CD4-positive, alpha-beta T cell (primary cell): ENCODE measurements at regions of chr12 and their contacts with region 1.

Region 1: GRCh38 chr12:9049520-9050133 is 60.3 kb downstream of the KLRG1 start:
- DNase-seq: peak in 4 of 14 experiments; percentile 60 to 79 (median 74)
- ATAC-seq: peak; percentile 85
- H3K4me3 ChIP-seq: no peak overlapping the region
- H3K4me3 Mint-ChIP-seq: no peak overlapping the region
- H3K27ac ChIP-seq: no peak overlapping the region
- H3K27ac Mint-ChIP-seq: peak overlapping the region; percentile 15
- H3K4me1 ChIP-seq: peaks cover 9% of the 10 kb centered on the region
- H3K4me1 Mint-ChIP-seq: peaks cover 27% of the 10 kb centered on the region
- H3K27me3 ChIP-seq: no peaks in the 10 kb centered on the region
- H3K27me3 Mint-ChIP-seq: no peaks in the 10 kb centered on the region
- CTCF ChIP-seq: peak; percentile 74

Region 2: GRCh38 chr12:8549381-8549780 is 500.2 kb before region 1 on chr12:
- CTCF ChIA-PET with region 1: interaction called, 5 read pairs
- POLR2A ChIA-PET with region 1: interaction called, 5 read pairs
- intact Hi-C with region 1: loop called (anchors 1 to 5 kb)
- DNase-seq: no peak
- ATAC-seq: no peak
- H3K4me3 ChIP-seq: no peak overlapping the region
- H3K4me3 Mint-ChIP-seq: no peak overlapping the region
- H3K27ac ChIP-seq: no peak overlapping the region
- H3K27ac Mint-ChIP-seq: no peak overlapping the region
- H3K4me1 ChIP-seq: no peaks in the 10 kb centered on the region
- H3K4me1 Mint-ChIP-seq: peaks cover 3% of the 10 kb centered on the region
- H3K27me3 ChIP-seq: no peaks in the 10 kb centered on the region
- H3K27me3 Mint-ChIP-seq: peaks cover 9% of the 10 kb centered on the region
- CTCF ChIP-seq: no peak

Region 3: DNA sequence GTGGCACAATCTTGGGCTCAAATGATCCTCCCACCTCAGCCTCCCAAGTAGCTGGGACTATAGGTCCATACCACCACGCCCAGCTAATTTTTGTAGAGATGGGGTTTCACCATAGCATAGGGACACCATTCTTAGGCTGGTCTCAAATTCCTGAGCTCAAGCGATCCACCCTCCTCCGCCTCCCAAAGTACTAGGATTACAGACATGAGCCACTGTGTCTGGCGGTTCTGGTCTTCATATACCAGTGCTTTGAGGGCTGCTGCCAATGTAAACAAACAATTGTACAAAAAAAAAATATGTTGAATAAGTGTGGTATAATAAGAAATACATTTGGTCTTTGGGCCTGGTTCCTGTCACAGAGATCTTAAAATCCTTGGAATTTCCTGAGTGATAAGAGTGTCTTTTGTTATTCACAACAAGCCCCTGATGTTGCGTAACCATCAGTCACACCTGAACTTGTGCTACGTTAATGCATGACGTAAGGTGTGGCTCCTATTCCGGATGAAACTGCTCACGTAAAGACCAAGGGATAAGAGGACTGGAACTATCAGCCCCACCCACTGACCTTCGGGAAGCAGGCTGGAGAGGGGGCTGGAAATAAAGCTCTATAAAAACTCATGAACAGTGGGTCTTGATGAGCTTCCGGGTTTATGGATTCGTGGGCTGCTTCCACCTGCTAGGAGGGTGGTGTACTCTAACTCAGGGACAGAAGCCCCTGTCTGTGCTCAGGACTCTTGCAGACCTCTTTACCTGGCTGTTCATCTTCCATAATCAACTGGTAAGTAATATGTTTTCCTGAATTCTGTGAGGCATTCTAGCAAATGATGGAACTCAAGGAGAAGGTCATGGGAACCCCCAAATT is 368.4 kb before region 1 on chr12:
- CTCF ChIA-PET with region 1: interaction called, 6 read pairs
- POLR2A ChIA-PET with region 1: no interaction called
- intact Hi-C with region 1: loop called (anchors 1 kb)
- DNase-seq: no peak
- ATAC-seq: no peak
- H3K4me3 ChIP-seq: no peak overlapping the region
- H3K4me3 Mint-ChIP-seq: no peak overlapping the region
- H3K27ac ChIP-seq: no peak overlapping the region
- H3K27ac Mint-ChIP-seq: no peak overlapping the region
- H3K4me1 ChIP-seq: peaks cover 5% of the 10 kb centered on the region
- H3K4me1 Mint-ChIP-seq: peaks cover 5% of the 10 kb centered on the region
- H3K27me3 ChIP-seq: no peaks in the 10 kb centered on the region
- H3K27me3 Mint-ChIP-seq: no peaks in the 10 kb centered on the region
- CTCF ChIP-seq: no peak

Region 4: DNA sequence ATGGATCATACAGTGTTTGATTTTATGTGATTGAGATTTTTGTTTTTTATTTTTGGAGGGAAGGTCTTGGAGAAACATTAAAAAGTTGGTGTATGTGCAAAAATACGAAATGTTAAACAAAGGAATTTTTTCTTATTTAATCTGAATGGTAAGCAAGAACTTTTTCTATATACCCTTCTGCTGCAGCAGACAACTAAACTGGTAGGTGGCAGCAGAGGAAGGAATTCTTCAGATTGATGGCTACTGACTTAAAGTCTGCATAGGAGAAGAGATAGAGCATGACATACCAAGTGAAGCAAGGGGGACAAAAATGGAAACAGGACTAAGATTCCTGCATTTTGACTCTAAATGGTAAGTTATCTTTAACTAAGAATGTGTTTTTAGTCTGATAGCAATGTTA is 269.2 kb before region 1 on chr12:
- CTCF ChIA-PET with region 1: no interaction called
- POLR2A ChIA-PET with region 1: no interaction called
- intact Hi-C with region 1: loop called in 1 of 2 experiments (anchors 2 kb)
- DNase-seq: peak in 3 of 14 experiments; percentile 10 to 25 (median 16)
- ATAC-seq: no peak
- H3K4me3 ChIP-seq: no peak overlapping the region
- H3K4me3 Mint-ChIP-seq: no peak overlapping the region
- H3K27ac ChIP-seq: no peak overlapping the region
- H3K27ac Mint-ChIP-seq: no peak overlapping the region
- H3K4me1 ChIP-seq: no peaks in the 10 kb centered on the region
- H3K4me1 Mint-ChIP-seq: no peaks in the 10 kb centered on the region
- H3K27me3 ChIP-seq: no peaks in the 10 kb centered on the region
- H3K27me3 Mint-ChIP-seq: no peaks in the 10 kb centered on the region
- CTCF ChIP-seq: no peak

Region 5: DNA sequence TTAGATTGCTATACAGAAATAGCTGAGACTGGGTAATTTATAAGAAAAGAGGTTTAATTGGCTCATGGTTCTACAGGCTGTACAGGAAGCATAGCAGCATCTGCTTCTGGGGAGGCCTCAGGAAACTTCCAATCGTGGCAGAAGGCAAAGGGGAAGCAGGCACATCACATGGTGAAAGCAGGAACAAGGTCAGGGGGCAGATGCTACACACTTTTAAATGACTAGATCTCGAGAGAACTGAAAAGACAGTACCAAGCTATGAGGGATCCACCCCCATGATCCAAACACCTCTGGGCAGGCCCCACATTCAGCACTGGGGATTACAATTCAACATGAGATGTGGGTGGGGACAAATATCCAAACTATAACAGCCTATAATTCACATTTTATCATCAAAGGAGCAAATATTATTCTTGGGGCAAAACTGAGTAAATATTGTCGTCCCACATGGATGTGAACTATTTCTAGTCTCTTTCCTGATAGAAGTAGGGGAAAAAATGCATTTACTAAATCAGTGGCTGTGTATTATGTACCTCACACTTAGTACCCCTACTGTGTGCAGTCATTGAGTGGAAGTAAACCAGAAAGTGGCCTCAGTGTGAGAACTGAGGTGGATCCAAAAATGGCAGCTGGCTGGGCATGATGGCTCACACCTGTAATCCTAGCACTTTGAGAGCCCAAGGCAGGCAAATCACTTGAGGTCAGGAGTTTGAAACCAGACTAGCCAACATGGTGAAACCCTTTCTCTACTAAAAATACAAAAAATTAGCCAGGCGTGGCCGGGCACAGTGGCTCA is 252.6 kb before region 1 on chr12:
- CTCF ChIA-PET with region 1: no interaction called
- POLR2A ChIA-PET with region 1: no interaction called
- intact Hi-C with region 1: no loop called
- DNase-seq: no peak
- ATAC-seq: no peak
- H3K4me3 ChIP-seq: no peak overlapping the region
- H3K4me3 Mint-ChIP-seq: no peak overlapping the region
- H3K27ac ChIP-seq: no peak overlapping the region
- H3K27ac Mint-ChIP-seq: no peak overlapping the region
- H3K4me1 ChIP-seq: no peaks in the 10 kb centered on the region
- H3K4me1 Mint-ChIP-seq: no peaks in the 10 kb centered on the region
- H3K27me3 ChIP-seq: no peaks in the 10 kb centered on the region
- H3K27me3 Mint-ChIP-seq: no peaks in the 10 kb centered on the region
- CTCF ChIP-seq: no peak

Region 6: DNA sequence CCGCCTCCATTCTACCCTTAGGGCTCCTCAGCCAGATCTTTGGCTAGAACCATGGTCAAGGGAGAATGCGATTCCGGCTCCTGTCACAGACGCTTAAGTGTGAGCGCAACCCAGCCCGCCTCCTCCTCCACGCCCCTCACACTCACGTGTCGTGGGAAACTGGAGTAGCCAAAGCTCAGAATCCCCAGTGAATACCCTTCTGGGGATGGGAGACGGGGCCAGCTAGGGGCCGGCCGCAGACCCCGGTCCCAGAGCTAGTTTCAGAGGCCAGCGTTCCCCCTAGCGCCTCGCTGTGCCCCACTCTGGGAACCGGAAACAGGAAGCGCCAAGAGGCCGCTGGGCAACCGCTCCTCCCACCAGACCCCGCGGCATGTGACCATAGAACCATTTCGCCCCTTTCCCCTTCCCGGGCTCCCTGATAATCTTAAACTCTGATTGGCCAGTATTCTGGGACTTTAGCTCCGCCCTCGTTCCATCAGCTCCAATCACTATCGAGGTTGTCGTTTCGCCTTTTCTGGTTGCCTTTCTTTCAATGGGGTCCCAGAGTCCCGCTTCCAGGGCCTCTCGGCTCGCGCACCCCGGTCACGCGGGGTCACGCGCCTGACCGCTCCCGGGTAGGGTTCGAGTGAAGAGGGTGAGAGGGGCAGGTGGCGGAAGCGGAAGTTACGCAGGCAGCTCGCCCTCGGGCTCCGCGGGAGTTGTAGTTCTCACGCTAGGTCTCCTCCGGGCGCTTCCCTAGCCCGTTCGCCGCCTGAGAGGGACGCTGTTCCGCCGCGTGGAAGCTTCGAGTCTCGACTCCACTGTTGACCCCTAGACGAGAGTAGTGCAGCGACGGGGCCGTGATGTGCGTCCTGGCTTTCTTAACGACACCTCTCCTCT is 100.0 kb before region 1 on chr12 and contains the start of gene M6PR:
- CTCF ChIA-PET with region 1: interaction called, 75 read pairs
- POLR2A ChIA-PET with region 1: interaction called, 52 read pairs
- intact Hi-C with region 1: loop called in 1 of 2 experiments (anchors 1 kb)
- DNase-seq: peak; percentile 78 to 95 (median 84)
- ATAC-seq: peak; percentile 71
- H3K4me3 ChIP-seq: peak within 1 kb of the TSS; percentile 79
- H3K4me3 Mint-ChIP-seq: peak within 1 kb of the TSS; percentile 91
- H3K27ac ChIP-seq: peak within 1 kb of the TSS; percentile 95 to 99
- H3K27ac Mint-ChIP-seq: peak within 1 kb of the TSS; percentile 93
- H3K4me1 ChIP-seq: peaks cover 43% of the 10 kb centered on the region
- H3K4me1 Mint-ChIP-seq: peaks cover 72% of the 10 kb centered on the region
- H3K27me3 ChIP-seq: no peaks in the 10 kb centered on the region
- H3K27me3 Mint-ChIP-seq: no peaks in the 10 kb centered on the region
- CTCF ChIP-seq: peak; percentile 67
- total RNA-seq, gene M6PR: 53.4 to 55.8 TPM

Region 7: DNA sequence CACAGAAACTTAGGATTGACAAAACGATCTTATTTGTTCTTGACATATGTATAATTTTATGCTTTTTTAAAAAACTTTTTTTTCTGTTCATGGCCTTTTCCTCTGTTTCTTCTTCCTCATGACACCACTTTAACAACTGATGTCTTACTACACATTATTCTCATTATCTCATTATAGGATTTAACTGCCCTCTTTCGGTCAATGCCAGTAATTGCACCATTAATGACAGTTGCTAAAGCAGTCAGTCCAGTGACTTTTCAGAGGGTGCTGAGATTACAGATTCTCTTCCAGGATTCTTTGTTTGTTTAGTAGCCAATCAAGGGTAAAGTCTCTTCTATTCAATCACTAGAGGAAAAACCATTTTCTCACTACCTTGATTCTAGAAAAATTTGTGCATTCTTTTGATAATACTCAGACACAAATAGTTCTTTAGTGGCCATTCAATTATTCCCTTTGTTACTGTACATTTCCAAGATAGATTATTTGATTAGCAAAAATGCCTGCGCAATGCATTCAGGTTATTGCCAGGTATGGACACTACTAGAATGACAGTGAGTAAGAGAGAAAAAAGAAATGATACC is 10.1 kb before region 1 on chr12:
- CTCF ChIA-PET with region 1: interaction called, 8 read pairs
- POLR2A ChIA-PET with region 1: interaction called, 3 read pairs
- intact Hi-C with region 1: loop called in 1 of 2 experiments (anchors 1 kb)
- DNase-seq: peak in 4 of 14 experiments; percentile 25 to 80 (median 77)
- ATAC-seq: peak; percentile 89
- H3K4me3 ChIP-seq: no peak overlapping the region
- H3K4me3 Mint-ChIP-seq: peak overlapping the region; percentile 21
- H3K27ac ChIP-seq: no peak overlapping the region
- H3K27ac Mint-ChIP-seq: peak overlapping the region; percentile 80
- H3K4me1 ChIP-seq: peaks cover 39% of the 10 kb centered on the region
- H3K4me1 Mint-ChIP-seq: peaks cover 63% of the 10 kb centered on the region
- H3K27me3 ChIP-seq: no peaks in the 10 kb centered on the region
- H3K27me3 Mint-ChIP-seq: no peaks in the 10 kb centered on the region
- CTCF ChIP-seq: peak; percentile 88

Region 8: GRCh38 chr12:9132008-9132535 is 82.4 kb after region 1 on chr12:
- CTCF ChIA-PET with region 1: no interaction called
- POLR2A ChIA-PET with region 1: no interaction called
- intact Hi-C with region 1: no loop called
- DNase-seq: no peak
- ATAC-seq: no peak
- H3K4me3 ChIP-seq: no peak overlapping the region
- H3K4me3 Mint-ChIP-seq: no peak overlapping the region
- H3K27ac ChIP-seq: no peak overlapping the region
- H3K27ac Mint-ChIP-seq: no peak overlapping the region
- H3K4me1 ChIP-seq: no peaks in the 10 kb centered on the region
- H3K4me1 Mint-ChIP-seq: no peaks in the 10 kb centered on the region
- H3K27me3 ChIP-seq: no peaks in the 10 kb centered on the region
- H3K27me3 Mint-ChIP-seq: no peaks in the 10 kb centered on the region
- CTCF ChIP-seq: no peak